Endothelial cell of umbilical vein (primary cell): ENCODE measurements at regions of chr11 and their contacts with region 1.

Region 1: DNA sequence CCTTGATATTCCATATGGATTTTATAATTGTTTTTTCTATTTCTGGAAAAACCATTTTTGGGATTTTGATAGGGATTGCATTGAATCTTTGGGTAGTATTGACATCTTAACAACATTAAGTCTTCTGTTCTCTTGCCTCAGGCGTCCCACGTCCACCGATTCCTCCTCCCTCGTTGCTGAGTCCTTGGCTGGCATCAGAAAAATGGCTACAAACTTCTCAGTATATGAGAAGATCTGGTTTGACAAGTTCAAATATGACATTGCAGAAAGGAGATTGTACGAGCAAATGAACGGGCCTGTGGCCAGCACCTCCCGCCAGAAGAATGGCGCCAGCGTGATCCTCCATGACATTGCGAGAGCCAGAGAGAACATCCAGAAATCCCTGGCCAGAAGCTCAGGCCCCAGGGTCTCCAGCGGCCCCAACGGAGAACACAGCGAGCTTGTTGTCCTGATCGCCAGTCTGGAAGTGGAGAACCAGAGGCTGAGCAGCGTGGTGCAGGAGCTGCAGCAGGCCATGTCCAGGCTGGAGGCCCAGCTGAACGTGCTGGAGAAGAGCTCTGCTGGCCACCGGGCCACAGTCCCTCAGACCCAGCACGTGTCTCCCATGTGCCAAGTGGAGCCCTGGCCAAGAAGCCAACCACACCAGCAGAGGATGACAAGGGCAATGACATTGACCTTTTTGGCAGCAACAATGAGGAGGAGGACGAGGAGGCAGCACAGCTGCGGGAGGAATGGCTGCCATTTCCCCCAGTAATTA is 20.7 kb upstream of the SCGB1D1 start:
- DNase-seq: peak; percentile 11
- H3K4me3 ChIP-seq: no peak overlapping the region
- H3K27ac ChIP-seq: no peak overlapping the region
- H3K4me1 ChIP-seq: peaks cover 6% of the 10 kb centered on the region
- H3K27me3 ChIP-seq: peaks cover 31 to 44% of the 10 kb centered on the region in 2 experiments
- CTCF ChIP-seq: no peak
- POLR2A ChIP-seq: no peak

Region 2: GRCh38 chr11:62025487-62026105 is 143.7 kb before region 1 on chr11:
- CTCF ChIA-PET with region 1: no interaction called
- POLR2A ChIA-PET with region 1: no interaction called
- dilution Hi-C with region 1: no loop called
- intact Hi-C with region 1: no loop called
- DNase-seq: peak; percentile 94
- H3K4me3 ChIP-seq: no peak overlapping the region
- H3K27ac ChIP-seq: peak overlapping the region; percentile 69
- H3K4me1 ChIP-seq: peaks cover 15% of the 10 kb centered on the region
- H3K27me3 ChIP-seq: no peaks in the 10 kb centered on the region
- CTCF ChIP-seq: no peak
- POLR2A ChIP-seq: no peak

Region 3: DNA sequence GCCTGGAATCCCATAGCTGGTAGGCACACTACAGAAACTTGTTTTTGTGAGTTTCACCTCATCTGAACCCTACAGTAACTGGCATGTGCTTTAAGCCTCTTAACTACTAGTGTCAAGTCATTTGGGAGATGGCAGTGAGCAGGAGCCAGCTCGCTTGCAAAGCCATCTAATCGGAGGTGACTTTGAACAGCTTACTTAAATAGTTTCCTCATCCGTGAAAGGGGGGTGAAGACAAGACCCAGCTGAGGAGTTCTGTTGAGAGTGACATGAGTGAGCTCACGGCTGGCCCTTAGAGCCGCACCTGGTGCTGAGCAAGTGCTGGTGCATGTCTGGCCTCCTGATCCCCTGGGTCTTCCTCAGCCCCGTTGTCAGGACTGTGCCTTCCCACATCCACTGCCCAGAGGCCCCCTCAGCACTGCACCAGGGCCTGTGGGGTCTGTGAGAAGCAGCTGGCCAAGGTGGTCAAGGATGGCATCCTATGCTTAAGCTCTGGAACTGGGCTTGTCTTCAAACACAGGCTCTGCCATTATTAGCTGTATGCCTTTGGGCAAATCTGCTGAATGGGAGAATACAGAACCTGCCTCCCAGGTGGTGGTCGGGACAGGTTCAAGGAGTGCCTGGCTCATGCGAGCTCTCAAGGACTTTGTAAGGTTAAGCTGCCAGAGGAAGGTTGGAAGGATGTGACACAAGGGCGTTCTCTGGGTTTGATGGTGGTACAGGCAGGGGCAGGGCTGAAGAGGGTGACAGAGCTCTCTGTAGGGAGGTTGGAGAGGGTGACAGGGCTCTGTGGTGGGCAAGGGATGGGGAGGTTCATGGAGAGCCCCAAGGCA is 18.1 kb before region 1 on chr11:
- CTCF ChIA-PET with region 1: interaction called, 13 read pairs
- POLR2A ChIA-PET with region 1: no interaction called
- dilution Hi-C with region 1: no loop called
- intact Hi-C with region 1: no loop called
- DNase-seq: no peak
- H3K4me3 ChIP-seq: no peak overlapping the region
- H3K27ac ChIP-seq: no peak overlapping the region
- H3K4me1 ChIP-seq: peaks cover 22% of the 10 kb centered on the region
- H3K27me3 ChIP-seq: no peaks in the 10 kb centered on the region
- CTCF ChIP-seq: no peak
- POLR2A ChIP-seq: no peak

Region 4: GRCh38 chr11:62179995-62180394 is 10.7 kb after region 1 on chr11:
- CTCF ChIA-PET with region 1: interaction called, 10 read pairs
- POLR2A ChIA-PET with region 1: no interaction called
- dilution Hi-C with region 1: no loop called
- intact Hi-C with region 1: no loop called
- DNase-seq: no peak
- H3K4me3 ChIP-seq: no peak overlapping the region
- H3K27ac ChIP-seq: no peak overlapping the region
- H3K4me1 ChIP-seq: no peaks in the 10 kb centered on the region
- H3K27me3 ChIP-seq: peaks cover 15 to 27% of the 10 kb centered on the region in 2 experiments
- CTCF ChIP-seq: no peak
- POLR2A ChIP-seq: no peak

Region 5: GRCh38 chr11:62208785-62209144 is 39.5 kb after region 1 on chr11:
- CTCF ChIA-PET with region 1: interaction called, 18 read pairs
- POLR2A ChIA-PET with region 1: no interaction called
- dilution Hi-C with region 1: loop called (anchors 5 kb)
- intact Hi-C with region 1: loop called (anchors 1 kb)
- DNase-seq: no peak
- H3K4me3 ChIP-seq: no peak overlapping the region
- H3K27ac ChIP-seq: no peak overlapping the region
- H3K4me1 ChIP-seq: no peaks in the 10 kb centered on the region
- H3K27me3 ChIP-seq: peaks cover 0 to 4% of the 10 kb centered on the region in 2 experiments
- CTCF ChIP-seq: no peak
- POLR2A ChIP-seq: no peak

Region 6: DNA sequence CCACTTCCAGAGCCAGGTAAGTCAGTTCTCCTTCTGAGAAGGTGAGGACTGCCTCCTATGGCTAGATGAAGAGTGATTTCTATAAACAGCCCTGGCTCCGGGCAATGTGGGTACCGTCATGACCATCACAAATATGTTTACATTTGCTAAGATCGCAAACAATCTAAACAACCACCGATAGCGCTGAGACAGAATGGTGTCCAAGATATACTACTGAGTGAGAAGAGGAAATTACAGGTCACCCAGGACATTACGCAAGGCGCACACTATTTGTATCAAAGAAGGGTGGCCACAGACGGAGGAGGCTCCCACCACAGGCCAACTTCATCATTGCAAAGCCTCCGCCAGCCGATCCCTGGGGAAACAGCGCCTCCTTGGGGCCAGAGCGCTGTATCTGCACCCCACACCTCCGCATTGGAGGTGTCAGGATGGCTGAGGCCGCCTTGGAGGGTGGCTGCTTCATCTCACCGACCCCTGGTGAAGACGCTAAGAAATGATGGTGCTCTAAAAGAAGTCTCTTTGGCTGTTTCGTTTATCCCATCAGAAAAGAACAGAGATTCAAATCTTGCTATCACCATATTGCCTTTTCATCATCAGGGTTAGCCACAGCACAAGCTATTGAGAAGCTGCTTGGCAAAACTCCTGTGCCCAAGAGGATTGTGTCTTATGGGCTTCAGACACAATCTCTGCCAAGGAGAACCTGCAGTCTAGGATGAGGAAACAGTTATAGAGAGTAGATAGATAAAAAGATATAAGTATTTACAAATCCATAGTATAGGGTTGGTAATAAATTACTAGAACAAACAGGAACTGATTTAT is 155.7 kb after region 1 on chr11:
- CTCF ChIA-PET with region 1: no interaction called
- POLR2A ChIA-PET with region 1: no interaction called
- dilution Hi-C with region 1: no loop called
- intact Hi-C with region 1: loop called (anchors 1 kb)
- DNase-seq: peak; percentile 45
- H3K4me3 ChIP-seq: no peak overlapping the region
- H3K27ac ChIP-seq: no peak overlapping the region
- H3K4me1 ChIP-seq: no peaks in the 10 kb centered on the region
- H3K27me3 ChIP-seq: peaks cover 0 to 5% of the 10 kb centered on the region in 2 experiments
- CTCF ChIP-seq: peak; percentile 79 to 82
- POLR2A ChIP-seq: no peak